OCI-LY7 (cell line): ENCODE measurements at regions of chr12 and their contacts with region 1.

Region 1: DNA sequence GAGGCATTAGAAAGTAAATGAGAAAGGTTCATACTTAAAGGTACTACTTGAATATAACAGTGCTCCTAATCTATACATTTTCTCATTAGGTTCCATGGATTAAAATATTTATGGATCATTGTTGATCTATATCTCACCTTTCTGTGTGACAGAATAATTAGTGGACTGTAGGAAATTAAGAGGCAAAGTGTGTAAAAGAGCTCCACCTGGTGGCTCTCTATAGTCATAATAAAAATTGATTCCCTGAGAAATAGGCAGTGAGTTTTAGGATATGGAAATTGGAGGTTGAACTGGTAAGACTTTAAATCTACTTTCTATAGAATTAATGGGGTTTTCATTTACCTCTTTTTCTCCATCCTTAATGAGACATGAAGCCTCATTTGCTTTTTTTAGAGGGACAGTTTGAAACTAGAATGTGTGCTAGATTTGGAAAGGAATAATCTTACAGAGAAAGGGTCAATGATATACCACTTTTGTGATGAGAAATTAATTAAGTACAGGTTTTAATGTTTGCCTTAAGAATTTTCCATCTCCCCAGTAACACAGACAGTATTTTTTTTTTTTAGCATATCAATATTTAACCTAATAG is 11.8 kb upstream of the DERA start:
- DNase-seq: peak; percentile 46
- H3K4me3 ChIP-seq: no peak overlapping the region
- H3K27ac ChIP-seq: no peak overlapping the region
- H3K4me1 ChIP-seq: no peaks in the 10 kb centered on the region
- CTCF ChIP-seq: peak; percentile 93

Region 2: DNA sequence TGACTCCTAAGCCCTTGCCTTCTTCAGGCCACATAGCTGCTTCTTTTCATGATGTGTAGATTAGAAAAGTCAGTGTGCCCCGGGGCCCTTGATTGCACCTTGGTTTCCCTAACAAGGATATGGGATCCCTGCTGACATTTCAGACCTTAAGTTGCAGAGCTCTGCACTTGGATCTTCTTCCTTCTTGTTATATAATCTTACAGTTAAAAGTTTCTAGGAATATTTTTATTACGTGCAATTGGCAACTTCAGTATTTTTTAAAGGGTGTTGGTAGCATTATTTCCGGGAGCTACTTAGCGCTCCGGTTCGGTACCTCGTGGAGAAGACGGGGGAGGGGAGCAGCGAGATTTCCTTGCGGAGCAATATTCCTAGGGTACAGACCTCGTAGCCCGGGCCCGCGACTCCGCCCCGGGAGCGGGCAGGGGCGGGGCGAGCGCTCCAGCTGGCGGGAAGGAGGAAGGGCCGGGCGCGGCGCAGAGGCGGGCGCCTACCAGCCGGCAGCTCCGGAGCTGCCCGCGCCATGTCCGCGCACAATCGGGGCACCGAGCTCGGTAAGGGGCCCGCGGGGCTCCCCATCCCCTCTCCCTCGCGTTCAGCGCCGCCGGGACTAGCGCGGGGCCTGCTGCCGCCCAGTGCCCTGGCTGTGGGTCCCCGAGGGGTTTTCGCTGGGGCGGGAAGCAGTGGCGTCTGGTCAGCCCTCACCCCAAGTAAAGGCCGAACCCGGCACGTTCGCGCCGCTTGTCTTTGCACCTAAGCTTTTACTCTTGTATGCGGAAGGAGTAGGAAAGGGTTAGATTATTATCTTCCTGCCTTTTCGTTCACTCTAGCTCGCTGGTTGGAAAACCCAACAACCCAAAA is 11.7 kb after region 1 on chr12 and contains the start of gene DERA:
- CTCF ChIA-PET with region 1: interaction called, 3 read pairs
- POLR2A ChIA-PET with region 1: interaction called, 18 read pairs
- intact Hi-C with region 1: no loop called
- DNase-seq: peak; percentile 63
- H3K4me3 ChIP-seq: peak within 1 kb of the TSS; percentile 83
- H3K27ac ChIP-seq: peak within 1 kb of the TSS; percentile 44
- H3K4me1 ChIP-seq: peaks cover 13% of the 10 kb centered on the region
- CTCF ChIP-seq: peak; percentile 22; the same call in 1 of the 2 replicates
- total RNA-seq, gene DERA: 54.9 and 68.6 TPM in 2 replicates